ENCODE measurements at regions of chr7 and their contacts with region 1.

Region 1: DNA sequence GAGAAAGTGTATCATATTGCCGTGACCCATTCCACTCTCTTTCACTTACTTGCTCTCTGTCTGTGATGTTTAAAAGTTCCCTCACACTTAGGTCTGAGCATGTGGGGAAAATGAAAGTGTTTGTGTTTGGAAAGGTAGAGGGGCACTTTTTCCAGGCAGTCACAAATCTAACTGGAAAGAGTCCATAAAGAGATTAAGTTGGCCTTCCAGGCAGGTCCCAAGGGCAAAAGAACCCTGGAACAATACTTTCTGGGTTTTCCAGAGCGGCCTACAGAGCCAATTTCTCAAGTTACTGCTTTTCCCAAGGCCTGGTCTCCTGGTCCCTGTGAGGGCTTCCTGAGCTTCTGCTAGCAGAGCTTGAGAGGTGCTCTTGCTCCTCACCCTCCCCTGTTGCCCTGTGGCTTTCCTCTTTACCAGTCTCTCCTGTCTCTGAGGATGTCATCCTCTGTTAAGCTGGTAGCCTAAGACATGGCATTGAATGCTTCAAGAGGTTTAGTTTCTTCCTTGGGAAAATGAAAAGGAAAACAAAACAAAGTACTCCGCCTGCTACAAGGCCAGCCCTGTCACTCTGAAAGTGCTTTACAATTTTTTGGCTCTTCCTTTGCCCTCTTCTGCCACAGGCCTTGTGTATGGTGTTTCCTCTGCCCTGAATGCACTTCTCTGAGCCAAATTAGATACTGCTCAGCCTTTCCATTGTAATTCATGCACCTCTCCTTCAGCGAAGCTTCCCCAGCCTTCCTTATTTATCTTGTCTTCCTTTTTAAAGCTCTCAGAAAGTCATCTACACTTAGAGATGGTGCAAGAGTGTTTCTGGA is 20.1 kb downstream of the TES start:
- DNase-seq: no peak
- ATAC-seq: peak; percentile 39
- H3K4me3 ChIP-seq: no peak overlapping the region
- H3K4me3 Mint-ChIP-seq: peak overlapping the region; percentile 10 to 65 (median 46)
- H3K27ac ChIP-seq: peak overlapping the region; percentile 27
- H3K27ac Mint-ChIP-seq: peak overlapping the region; percentile 38 to 80 (median 65)
- H3K4me1 ChIP-seq: peaks cover 40 to 53% of the 10 kb centered on the region in 2 donors
- H3K4me1 Mint-ChIP-seq: peaks cover 57 to 98% (median 87%) of the 10 kb centered on the region in 7 donors
- H3K27me3 ChIP-seq: no peaks in the 10 kb centered on the region
- H3K27me3 Mint-ChIP-seq: no peaks in the 10 kb centered on the region

Region 2: GRCh38 chr7:116218051-116218645 is 12.2 kb before region 1 on chr7:
- CTCF ChIA-PET with region 1: interaction called, 66 read pairs
- POLR2A ChIA-PET with region 1: interaction called, 43 read pairs
- intact Hi-C with region 1: loop called (anchors 1 kb)
- DNase-seq: no peak
- ATAC-seq: peak; percentile 36
- H3K4me3 ChIP-seq: no peak overlapping the region
- H3K4me3 Mint-ChIP-seq: peak overlapping the region in 9 of 10 donors; percentile 41 to 76 (median 61)
- H3K27ac ChIP-seq: peak overlapping the region; percentile 4
- H3K27ac Mint-ChIP-seq: peak overlapping the region; percentile 0 to 92 (median 44)
- H3K4me1 ChIP-seq: peaks cover 82 to 85% of the 10 kb centered on the region in 2 donors
- H3K4me1 Mint-ChIP-seq: peaks cover 69 to 96% (median 92%) of the 10 kb centered on the region in 7 donors
- H3K27me3 ChIP-seq: no peaks in the 10 kb centered on the region
- H3K27me3 Mint-ChIP-seq: no peaks in the 10 kb centered on the region